ENCODE measurements at regions of chr5 and their contacts with region 1.

Region 1: GRCh38 chr5:130400090-130400489 is 495.8 kb downstream of the CHSY3 start:
- DNase-seq: no peak
- ATAC-seq: no peak
- H3K4me3 Mint-ChIP-seq: no peak overlapping the region
- H3K27ac Mint-ChIP-seq: no peak overlapping the region
- H3K4me1 Mint-ChIP-seq: peaks cover 25% of the 10 kb centered on the region
- H3K27me3 Mint-ChIP-seq: no peaks in the 10 kb centered on the region
- CTCF ChIP-seq: no peak

Region 2: GRCh38 chr5:130116462-130116861 is 283.6 kb before region 1 on chr5:
- CTCF ChIA-PET with region 1: no interaction called
- POLR2A ChIA-PET with region 1: interaction called, 11 read pairs
- DNase-seq: no peak
- ATAC-seq: no peak
- H3K4me3 Mint-ChIP-seq: no peak overlapping the region
- H3K27ac Mint-ChIP-seq: no peak overlapping the region
- H3K4me1 Mint-ChIP-seq: peaks cover 14% of the 10 kb centered on the region
- H3K27me3 Mint-ChIP-seq: no peaks in the 10 kb centered on the region
- CTCF ChIP-seq: no peak

Region 3: DNA sequence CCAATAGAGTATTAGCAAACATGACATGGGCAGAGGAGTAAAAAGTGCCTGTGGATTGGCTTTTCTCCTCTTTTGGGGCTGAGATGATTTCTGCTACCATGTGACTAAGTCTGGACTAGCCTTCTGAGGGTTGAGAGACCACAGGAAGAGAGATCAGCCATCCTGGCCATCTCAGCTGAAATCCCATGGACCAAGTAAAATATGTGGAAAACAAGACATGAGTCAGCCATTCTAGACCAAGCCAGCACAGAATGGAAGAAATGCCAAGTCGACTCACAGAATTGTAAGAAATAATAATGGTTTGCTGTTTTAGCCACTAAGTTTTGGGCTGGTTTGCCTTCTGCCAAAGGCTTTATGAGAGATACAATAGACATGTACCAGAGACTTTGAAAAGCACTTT is 118.0 kb before region 1 on chr5:
- CTCF ChIA-PET with region 1: no interaction called
- POLR2A ChIA-PET with region 1: no interaction called
- DNase-seq: no peak
- ATAC-seq: no peak
- H3K4me3 Mint-ChIP-seq: no peak overlapping the region
- H3K27ac Mint-ChIP-seq: no peak overlapping the region
- H3K4me1 Mint-ChIP-seq: peaks cover 5% of the 10 kb centered on the region; the same call in 1 of the 2 replicates
- H3K27me3 Mint-ChIP-seq: peaks cover 41% of the 10 kb centered on the region
- CTCF ChIP-seq: no peak